ENCODE measurements at regions of chr1 and their contacts with region 1.

Region 1: GRCh38 chr1:169601093-169601881 is 15.0 kb upstream of the F5 start:
- DNase-seq: no peak
- ATAC-seq: peak; percentile 40

Region 2: GRCh38 chr1:168939548-168940245 is 661.6 kb before region 1 on chr1:
- intact Hi-C with region 1: no loop called
- DNase-seq: peak; percentile 15 to 47
- ATAC-seq: peak; percentile 99

Region 3: DNA sequence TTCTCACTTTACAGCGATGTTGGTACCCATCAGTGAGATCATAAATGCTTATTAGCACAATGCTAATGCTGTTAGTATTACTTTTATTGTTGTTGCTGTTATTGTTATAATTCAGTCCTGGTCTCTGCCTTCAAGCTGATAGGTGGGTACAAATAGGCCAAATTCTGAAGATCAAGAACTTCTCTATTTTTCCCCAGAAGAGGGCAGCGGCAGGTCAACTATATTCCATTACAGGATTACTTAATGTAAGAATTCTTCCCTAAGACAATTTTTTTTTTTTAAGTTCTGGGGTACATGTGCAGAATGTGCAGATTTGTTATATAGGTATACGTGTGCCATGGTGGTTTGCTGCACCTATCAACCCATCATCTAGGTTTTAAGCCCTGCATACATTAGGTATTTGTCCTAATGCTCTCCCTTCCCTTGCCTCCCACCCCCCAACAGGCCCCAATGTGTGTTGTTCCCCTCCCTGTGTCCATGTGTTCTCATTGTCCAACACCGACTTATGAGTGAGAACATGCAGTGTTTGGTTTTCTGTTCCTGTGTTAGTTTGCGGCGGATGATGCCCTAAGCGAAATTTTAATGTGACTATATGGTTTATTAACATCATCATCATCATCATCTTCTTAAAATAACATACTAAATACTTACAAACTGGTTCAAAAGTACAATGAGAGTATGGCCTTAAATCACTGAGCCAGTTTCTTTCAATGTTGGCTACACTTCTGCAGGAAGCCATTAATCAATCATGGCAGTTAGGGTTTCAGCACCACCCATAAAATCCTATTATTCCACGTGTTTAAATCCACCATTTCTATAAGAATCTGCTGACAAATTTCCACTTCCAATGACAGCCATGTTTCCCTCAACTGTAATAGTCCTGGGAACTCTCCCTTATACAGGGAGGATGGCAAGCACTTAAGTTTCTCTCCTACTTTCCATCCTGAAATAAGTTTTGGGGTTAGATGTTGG is 134.7 kb before region 1 on chr1:
- intact Hi-C with region 1: no loop called
- DNase-seq: no peak
- ATAC-seq: peak; percentile 50

Region 4: GRCh38 chr1:169680377-169681019 is 79.2 kb after region 1 on chr1:
- intact Hi-C with region 1: no loop called
- DNase-seq: peak in 1 of 2 donors; percentile 17
- ATAC-seq: no peak

Region 5: DNA sequence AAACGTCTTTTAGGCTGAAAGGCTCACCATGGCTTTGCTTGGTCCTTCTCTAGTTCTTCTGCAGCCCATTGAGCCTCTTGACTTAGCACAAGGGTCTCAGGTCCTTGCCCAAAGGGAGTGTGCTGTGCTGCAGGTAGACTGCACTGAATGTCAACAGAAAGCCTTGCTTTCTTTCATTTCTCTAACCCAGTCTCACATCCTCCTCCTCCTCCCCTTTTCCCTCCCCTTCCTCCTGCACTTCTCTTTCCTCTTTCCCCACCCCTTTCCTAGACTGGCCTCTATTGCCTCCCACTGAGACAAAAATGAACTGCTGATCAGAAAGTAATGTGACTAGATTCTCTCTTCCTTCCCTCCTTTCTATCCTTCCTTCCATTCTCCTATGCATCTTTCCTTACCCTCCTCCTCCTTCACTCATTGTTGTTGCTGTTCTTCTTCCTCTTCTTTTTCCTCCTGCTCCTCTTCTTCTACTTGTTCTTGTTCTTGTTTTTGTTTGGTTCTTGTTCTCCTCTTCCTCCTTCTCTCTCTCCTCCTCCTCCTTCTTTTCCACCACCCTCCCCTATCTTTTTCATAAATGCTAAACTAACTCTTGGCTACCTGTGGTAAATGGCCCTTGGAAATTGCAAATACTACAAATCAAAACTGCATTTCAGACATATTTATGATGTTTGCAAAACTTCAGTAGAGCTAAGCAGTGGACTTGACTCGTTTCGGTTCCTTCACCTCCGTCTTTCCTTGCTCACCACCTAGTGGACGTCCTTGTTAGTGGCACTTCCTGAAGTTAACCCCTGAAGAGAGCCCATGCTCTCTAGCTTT is 110.4 kb after region 1 on chr1 and contains the start of gene SELL:
- intact Hi-C with region 1: loop called in 1 of 2 experiments (anchors 10 kb)
- DNase-seq: peak; percentile 57 to 65
- ATAC-seq: peak; percentile 100
- total RNA-seq, gene SELL: 0.64 to 1.7 TPM